H1 (cell line): ENCODE measurements at regions of chr12 and their contacts with region 1.

Region 1: DNA sequence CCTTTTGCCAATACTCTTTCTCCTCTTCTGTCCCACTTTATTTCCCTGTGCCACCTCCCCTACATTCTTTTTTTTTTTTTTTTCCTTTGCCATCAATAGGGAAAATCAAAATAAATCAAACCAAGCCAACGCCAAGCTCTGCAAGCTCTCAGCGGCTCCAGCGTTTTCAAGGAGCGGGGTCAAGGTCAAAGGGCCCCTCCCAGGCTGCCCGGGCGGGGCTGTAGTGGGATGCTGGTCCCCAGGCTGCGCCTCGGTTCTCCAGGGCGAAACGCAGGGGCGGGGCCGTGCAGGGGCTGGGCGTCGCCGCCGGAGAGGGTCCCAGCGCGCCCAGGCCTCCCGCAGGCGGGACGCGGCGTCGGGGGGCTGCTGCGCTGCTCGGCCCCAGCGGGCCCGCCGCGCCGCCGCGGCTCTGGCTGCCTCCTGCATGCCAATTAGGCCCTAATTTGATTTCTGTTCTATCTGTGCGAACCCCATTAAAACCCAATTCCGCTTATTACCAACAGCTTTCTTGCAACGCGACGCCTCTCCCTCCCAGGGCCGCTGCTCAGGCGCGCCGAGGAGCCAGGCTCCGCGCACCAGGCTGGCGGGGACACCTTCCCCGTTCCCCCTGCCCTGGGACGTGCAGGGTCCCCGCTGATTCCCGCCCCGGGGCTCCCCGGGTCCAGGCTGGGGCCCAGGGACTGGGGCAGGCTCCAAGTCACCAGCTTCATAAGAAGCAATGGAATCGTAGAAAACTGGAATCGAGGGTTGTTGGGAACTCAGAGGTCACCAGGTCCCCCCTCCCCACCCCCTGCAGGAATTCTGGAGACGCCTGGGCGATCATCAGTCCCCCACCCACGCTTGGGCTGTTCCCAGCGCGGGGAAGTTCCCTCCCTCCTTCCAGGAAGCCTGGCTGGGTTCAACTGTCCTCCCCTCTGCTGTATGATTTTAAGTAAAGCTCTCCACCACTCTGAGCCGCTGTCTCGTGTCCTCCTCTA is 50.7 kb upstream of the MAP1LC3B2 start:
- DNase-seq: peak in 1 of 2 experiments; percentile 88
- H3K4me3 ChIP-seq: peak overlapping the region; percentile 57 to 76 (median 58)
- H3K27ac ChIP-seq: no peak overlapping the region
- H3K4me1 ChIP-seq: peaks cover 0 to 4% (median 1%) of the 10 kb centered on the region in 4 experiments; a peak in 4 of 7 replicates
- H3K27me3 ChIP-seq: peaks cover 0 to 4% (median 0%) of the 10 kb centered on the region in 4 experiments; a peak in 2 of 7 replicates
- CTCF ChIP-seq: no peak
- EP300 ChIP-seq: no peak
- POLR2A ChIP-seq: no peak
- RAD21 ChIP-seq: no peak; a peak in 1 of 4 replicates

Region 2: GRCh38 chr12:116497051-116497591 is 11.3 kb before region 1 on chr12:
- CTCF ChIA-PET with region 1: interaction called, 3 read pairs
- POLR2A ChIA-PET with region 1: interaction called, 12 read pairs
- DNase-seq: no peak
- H3K4me3 ChIP-seq: no peak overlapping the region
- H3K27ac ChIP-seq: no peak overlapping the region
- H3K4me1 ChIP-seq: peaks cover 0 to 10% (median 0%) of the 10 kb centered on the region in 4 experiments; a peak in 2 of 7 replicates
- H3K27me3 ChIP-seq: no peaks in the 10 kb centered on the region
- CTCF ChIP-seq: no peak
- EP300 ChIP-seq: no peak
- POLR2A ChIP-seq: no peak
- RAD21 ChIP-seq: no peak

Region 3: DNA sequence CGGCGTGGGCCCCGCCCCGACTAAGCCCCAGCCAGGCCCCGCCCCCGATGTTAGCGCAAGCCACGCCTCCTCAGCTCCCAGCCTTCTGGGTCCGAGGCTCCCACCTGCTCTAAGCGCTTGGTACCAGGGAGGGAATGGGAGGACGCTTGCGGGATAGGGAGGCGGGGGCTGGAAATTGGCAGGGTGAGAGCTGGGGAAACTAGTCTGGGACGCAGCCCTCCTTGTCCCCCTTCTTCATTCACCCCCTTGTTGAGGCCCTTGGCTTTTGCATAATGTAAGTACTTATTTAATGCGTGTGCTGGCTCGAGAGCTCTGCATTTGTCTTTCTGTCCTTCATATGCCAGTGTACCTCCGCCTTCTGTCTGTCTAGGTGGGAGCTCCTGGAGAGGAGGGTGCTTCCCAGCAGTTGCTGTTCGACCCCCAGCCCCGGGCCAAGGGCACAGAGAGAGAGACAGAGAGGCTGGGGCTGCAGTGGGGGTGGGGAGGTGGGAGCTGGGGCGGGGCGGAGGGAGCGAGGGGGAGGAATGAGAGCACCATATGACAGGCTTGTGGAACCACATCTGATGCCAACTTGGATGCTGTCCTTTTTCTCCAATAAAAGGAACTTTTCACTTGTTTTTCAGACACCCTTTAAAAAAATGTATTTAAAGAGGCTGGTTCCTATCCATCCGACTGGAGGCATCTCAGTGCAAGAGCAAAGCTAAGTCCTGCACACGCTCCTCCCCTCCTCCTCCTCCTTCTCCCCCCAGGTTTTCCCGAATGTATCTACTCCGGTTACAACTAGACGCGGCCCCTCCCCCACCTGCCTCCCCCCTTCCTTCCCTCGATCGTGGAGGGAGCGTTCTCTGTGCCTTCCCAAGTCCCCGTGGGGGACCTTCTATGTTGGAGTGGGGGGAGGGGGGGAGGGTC is 25.2 kb after region 1 on chr12:
- CTCF ChIA-PET with region 1: interaction called, 3 read pairs
- POLR2A ChIA-PET with region 1: interaction called, 16 read pairs
- DNase-seq: peak in 1 of 2 experiments; percentile 96
- H3K4me3 ChIP-seq: peak overlapping the region; percentile 81 to 84 (median 82)
- H3K27ac ChIP-seq: 0 out of 2 replicates have a peak overlapping the region, but pooled peaks have one; percentile 48
- H3K4me1 ChIP-seq: peaks cover 0 to 17% (median 11%) of the 10 kb centered on the region in 4 experiments; a peak in 6 of 7 replicates
- H3K27me3 ChIP-seq: peaks cover 0 to 3% (median 0%) of the 10 kb centered on the region in 4 experiments; a peak in 4 of 7 replicates
- CTCF ChIP-seq: no peak
- EP300 ChIP-seq: no peak; a peak in 1 of 3 replicates
- POLR2A ChIP-seq: peak in 1 of 2 experiments; percentile 3; a peak in 1 of 3 replicates
- RAD21 ChIP-seq: no peak